Common myeloid progenitor, CD34-positive (primary cell): ENCODE measurements at regions of chr5 and their contacts with region 1.

Region 1: GRCh38 chr5:119435436-119436132 is 16.7 kb upstream of the HSD17B4 start:
- DNase-seq: peak; percentile 85 to 96 (median 91)
- H3K4me3 ChIP-seq: peak overlapping the region in 2 of 7 experiments; percentile 36 to 50
- H3K27ac ChIP-seq: no peak overlapping the region
- H3K4me1 ChIP-seq: peaks cover 0 to 38% (median 31%) of the 10 kb centered on the region in 4 experiments
- H3K27me3 ChIP-seq: no peaks in the 10 kb centered on the region

Region 2: DNA sequence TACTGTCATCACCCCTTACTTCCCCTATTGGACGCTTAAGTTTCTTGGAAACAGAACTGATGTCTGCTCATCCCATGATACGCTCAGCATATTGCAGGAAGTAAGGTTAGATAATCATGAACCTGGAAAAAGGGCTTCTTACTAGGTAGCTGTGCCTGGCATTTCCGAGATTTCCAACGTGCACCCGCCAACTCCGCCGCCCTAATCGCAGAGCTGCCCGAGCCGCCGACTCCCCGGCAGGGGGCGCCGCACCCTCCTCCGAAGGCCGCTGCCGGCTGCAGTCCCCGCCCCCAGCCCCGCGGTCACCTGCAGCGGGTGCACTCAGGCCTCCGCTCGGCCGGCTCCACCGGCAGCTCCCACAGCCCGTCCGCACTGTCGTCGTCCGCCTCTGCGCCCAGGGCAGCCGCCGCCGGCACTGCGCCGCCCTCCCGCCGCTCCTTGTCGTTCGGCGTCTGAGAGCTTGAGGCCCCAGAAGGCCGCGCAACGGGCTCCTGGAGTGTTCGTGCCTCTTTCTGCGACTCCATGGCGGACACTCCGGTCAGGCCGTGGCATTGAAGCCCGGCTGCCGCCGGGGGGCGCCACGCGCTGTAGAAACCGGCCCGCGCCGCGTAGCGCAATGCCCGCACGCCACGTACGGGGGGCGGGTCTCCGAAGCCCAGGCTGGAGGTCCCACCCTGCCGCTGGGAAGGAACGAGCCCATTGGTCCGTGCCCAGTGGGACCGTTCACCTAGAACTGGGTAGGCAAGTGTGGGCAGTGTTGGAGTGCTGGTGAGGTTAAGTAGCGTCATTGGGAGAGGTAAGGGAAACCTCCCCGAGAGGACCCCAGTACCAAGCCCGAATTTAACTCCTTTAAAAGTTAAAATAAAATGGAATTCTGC is 447.4 kb before region 1 on chr5 and contains the start of gene DTWD2:
- CTCF ChIA-PET with region 1: interaction called, 16 read pairs
- POLR2A ChIA-PET with region 1: interaction called, 4 read pairs
- DNase-seq: peak; percentile 94 to 98 (median 96)
- H3K4me3 ChIP-seq: peak within 1 kb of the TSS; percentile 75 to 92 (median 84)
- H3K27ac ChIP-seq: peak within 1 kb of the TSS; percentile 82 to 89
- H3K4me1 ChIP-seq: peaks cover 8 to 19% (median 14%) of the 10 kb centered on the region in 4 experiments
- H3K27me3 ChIP-seq: no peaks in the 10 kb centered on the region

Region 3: GRCh38 chr5:119418531-119419116 is 17.0 kb before region 1 on chr5:
- CTCF ChIA-PET with region 1: interaction called, 10 read pairs
- POLR2A ChIA-PET with region 1: no interaction called
- DNase-seq: no peak
- H3K4me3 ChIP-seq: no peak overlapping the region
- H3K27ac ChIP-seq: no peak overlapping the region
- H3K4me1 ChIP-seq: peaks cover 9 to 32% (median 24%) of the 10 kb centered on the region in 4 experiments
- H3K27me3 ChIP-seq: no peaks in the 10 kb centered on the region